HepG2 (cell line): ENCODE measurements at regions of chr14 and their contacts with region 1.

Region 1: GRCh38 chr14:34331728-34332623 is 130.1 kb downstream of the SPTSSA start:
- DNase-seq: peak; percentile 95
- ATAC-seq: peak; percentile 95
- H3K4me3 ChIP-seq: peak overlapping the region; percentile 53 to 71 (median 57)
- H3K27ac ChIP-seq: peak overlapping the region; percentile 63
- H3K4me1 ChIP-seq: peaks cover 41% of the 10 kb centered on the region
- H3K27me3 ChIP-seq: no peaks in the 10 kb centered on the region
- CTCF ChIP-seq: peak; percentile 99
- EP300 ChIP-seq: no peak; a peak in 2 of 4 replicates
- POLR2A ChIP-seq: peak; percentile 39 to 45; a peak in 3 of 4 replicates
- RAD21 ChIP-seq: peak; percentile 97

Region 2: GRCh38 chr14:34283590-34283989 is 48.4 kb before region 1 on chr14:
- CTCF ChIA-PET with region 1: no interaction called
- POLR2A ChIA-PET with region 1: no interaction called
- in situ Hi-C with region 1: no loop called
- intact Hi-C with region 1: no loop called
- DNase-seq: no peak
- ATAC-seq: no peak
- H3K4me3 ChIP-seq: no peak overlapping the region
- H3K27ac ChIP-seq: no peak overlapping the region
- H3K4me1 ChIP-seq: no peaks in the 10 kb centered on the region
- H3K27me3 ChIP-seq: no peaks in the 10 kb centered on the region
- CTCF ChIP-seq: no peak
- EP300 ChIP-seq: no peak
- POLR2A ChIP-seq: no peak
- RAD21 ChIP-seq: no peak

Region 3: GRCh38 chr14:34453229-34453628 is 121.3 kb after region 1 on chr14:
- CTCF ChIA-PET with region 1: no interaction called
- POLR2A ChIA-PET with region 1: interaction called, 7 read pairs
- in situ Hi-C with region 1: no loop called
- intact Hi-C with region 1: loop called (anchors 2 kb)
- DNase-seq: no peak
- ATAC-seq: peak; percentile 26
- H3K4me3 ChIP-seq: no peak overlapping the region
- H3K27ac ChIP-seq: peak overlapping the region; percentile 10
- H3K4me1 ChIP-seq: peaks cover 72% of the 10 kb centered on the region
- H3K27me3 ChIP-seq: no peaks in the 10 kb centered on the region
- CTCF ChIP-seq: no peak
- EP300 ChIP-seq: no peak
- POLR2A ChIP-seq: peak in 1 of 2 experiments; percentile 42; a peak in 1 of 4 replicates
- RAD21 ChIP-seq: peak; percentile 41; the same call in 1 of the 2 replicates

Region 4: DNA sequence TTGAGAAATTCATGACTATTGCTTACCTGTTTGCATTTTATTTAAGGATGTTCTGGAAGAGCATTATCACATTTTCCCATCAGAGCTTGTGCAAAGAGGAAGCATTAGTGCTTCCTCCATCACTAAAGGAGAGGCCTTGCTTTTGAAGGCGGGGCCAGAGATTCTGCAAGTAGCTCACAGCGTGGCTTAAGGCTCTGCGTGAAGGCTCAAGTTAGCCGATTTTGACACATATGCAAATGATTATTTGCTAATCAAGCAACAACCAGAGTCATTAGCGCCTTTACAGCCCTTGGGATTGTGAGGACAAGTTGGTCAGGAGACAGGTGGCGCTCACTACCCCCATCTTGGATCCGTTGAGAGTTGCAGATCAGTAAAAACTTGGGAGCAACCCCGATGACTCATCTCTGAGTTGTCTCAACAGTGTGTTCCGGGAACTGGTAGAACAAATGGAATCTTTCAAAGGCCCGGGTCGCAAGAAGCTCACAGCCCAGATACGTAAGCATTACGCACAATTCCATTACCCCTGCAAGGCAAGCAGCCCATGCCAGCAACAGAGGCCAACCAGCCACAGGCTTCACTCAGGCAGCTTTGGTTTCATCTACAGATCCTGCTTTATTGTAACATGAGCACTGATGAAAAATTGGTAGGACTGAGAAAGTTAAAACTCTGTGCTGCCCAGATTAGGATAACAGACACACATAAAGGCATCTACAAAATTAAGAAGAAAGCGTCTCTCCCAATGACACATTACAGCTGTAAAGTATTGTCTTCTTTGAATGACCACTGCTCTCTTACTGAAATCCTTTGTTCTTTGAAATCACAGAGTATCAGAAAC is 164.9 kb after region 1 on chr14:
- CTCF ChIA-PET with region 1: interaction called, 149 read pairs
- POLR2A ChIA-PET with region 1: interaction called, 71 read pairs
- in situ Hi-C with region 1: loop called (anchors 5 kb)
- intact Hi-C with region 1: loop called (anchors 1 kb)
- DNase-seq: peak; percentile 99
- ATAC-seq: peak; percentile 71
- H3K4me3 ChIP-seq: peak overlapping the region; percentile 6 to 56 (median 15)
- H3K27ac ChIP-seq: peak overlapping the region; percentile 86
- H3K4me1 ChIP-seq: peaks cover 68% of the 10 kb centered on the region
- H3K27me3 ChIP-seq: no peaks in the 10 kb centered on the region
- CTCF ChIP-seq: peak; percentile 80
- EP300 ChIP-seq: peak; percentile 81 to 88
- POLR2A ChIP-seq: peak in 1 of 2 experiments; percentile 76; a peak in 1 of 4 replicates
- RAD21 ChIP-seq: peak; percentile 51; the same call in 1 of the 2 replicates

Region 5: DNA sequence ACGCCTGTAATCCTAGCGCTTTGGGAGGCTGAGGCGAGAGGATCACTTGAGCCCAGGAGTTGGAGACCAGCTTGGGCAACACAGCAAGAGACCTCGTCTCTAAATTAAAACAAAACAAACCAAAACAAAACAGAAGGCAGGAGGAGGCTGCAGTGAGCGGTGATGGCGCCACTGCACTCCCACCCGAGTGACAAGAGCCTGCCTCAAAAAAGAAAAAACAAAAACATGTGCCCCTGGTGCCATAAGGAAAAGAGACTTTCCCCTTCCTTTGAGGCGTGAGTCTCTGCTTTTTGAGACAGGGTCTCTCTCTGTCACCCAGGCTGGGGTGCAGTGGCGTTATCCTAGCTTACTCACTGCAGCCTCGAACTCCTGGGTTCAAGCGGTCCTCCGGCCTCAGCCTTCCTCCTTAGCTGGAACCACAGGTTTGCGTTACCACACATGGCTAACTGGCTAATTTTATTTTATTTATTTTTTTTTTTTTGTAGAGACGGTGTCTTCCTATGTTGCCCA is 216.6 kb after region 1 on chr14:
- CTCF ChIA-PET with region 1: no interaction called
- POLR2A ChIA-PET with region 1: interaction called, 13 read pairs
- in situ Hi-C with region 1: no loop called
- intact Hi-C with region 1: no loop called
- DNase-seq: no peak
- ATAC-seq: no peak
- H3K4me3 ChIP-seq: no peak overlapping the region
- H3K27ac ChIP-seq: no peak overlapping the region
- H3K4me1 ChIP-seq: peaks cover 11% of the 10 kb centered on the region; the same call in 1 of the 2 replicates
- H3K27me3 ChIP-seq: no peaks in the 10 kb centered on the region
- CTCF ChIP-seq: no peak
- EP300 ChIP-seq: no peak
- POLR2A ChIP-seq: no peak
- RAD21 ChIP-seq: no peak

Region 6: GRCh38 chr14:35423621-35424020 is 1091.6 kb after region 1 on chr14:
- CTCF ChIA-PET with region 1: no interaction called
- POLR2A ChIA-PET with region 1: no interaction called
- in situ Hi-C with region 1: no loop called
- intact Hi-C with region 1: loop called (anchors 2 kb)
- DNase-seq: no peak
- ATAC-seq: no peak
- H3K4me3 ChIP-seq: no peak overlapping the region
- H3K27ac ChIP-seq: no peak overlapping the region
- H3K4me1 ChIP-seq: peaks cover 36% of the 10 kb centered on the region
- H3K27me3 ChIP-seq: no peaks in the 10 kb centered on the region; a peak in 1 of 5 replicates
- CTCF ChIP-seq: no peak
- EP300 ChIP-seq: no peak
- POLR2A ChIP-seq: no peak
- RAD21 ChIP-seq: no peak